Caco-2 (cell line): ENCODE measurements at regions of chr13 and their contacts with region 1.

Region 1: DNA sequence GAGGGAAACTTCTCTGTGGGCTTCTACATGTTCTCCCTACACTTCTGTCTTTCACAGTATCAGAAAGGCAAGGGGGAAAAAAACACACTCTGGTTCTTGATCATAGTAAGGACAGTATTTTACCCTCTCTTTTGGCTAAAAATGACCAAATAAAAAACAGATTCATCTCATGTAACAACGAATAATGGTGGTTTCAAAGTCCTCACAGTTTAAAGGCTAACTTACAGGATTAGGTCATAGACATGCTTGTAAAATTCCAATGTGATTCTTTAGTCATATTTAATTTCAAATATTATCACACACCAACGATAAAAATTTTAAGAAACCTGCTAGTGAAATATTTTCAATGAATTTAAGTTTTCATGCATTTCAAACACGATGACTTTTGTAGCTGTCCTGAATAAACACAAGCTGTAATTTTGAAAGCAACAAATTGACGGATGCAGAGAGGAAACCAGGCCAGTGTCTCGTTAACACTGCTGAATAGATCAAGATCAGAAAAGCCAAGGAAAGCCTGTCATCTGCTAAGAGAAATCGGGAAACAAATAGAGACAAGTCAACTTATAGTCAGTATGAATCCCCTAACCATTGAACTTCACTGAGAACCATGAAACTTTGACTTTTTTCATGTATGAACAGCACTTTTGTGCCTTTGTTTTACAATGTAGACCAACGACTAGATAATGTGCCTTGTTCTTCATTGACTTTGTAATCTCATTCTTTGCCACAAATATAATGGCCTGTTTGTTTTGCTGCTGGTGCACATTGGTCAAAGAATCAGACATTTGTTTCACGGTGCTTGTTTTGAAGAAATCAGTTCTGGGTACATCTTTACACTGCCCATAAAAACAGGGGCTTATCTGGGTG is 22.0 kb downstream of the MBNL2 start:
- DNase-seq: peak; percentile 60 to 61
- H3K4me3 ChIP-seq: no peak overlapping the region
- H3K4me3 Mint-ChIP-seq: peak overlapping the region; percentile 9
- H3K27ac Mint-ChIP-seq: peak overlapping the region; percentile 48
- H3K4me1 ChIP-seq: peaks cover 44% of the 10 kb centered on the region
- H3K4me1 Mint-ChIP-seq: peaks cover 40% of the 10 kb centered on the region
- H3K27me3 ChIP-seq: no peaks in the 10 kb centered on the region
- H3K27me3 Mint-ChIP-seq: no peaks in the 10 kb centered on the region
- CTCF ChIP-seq: no peak

Region 2: DNA sequence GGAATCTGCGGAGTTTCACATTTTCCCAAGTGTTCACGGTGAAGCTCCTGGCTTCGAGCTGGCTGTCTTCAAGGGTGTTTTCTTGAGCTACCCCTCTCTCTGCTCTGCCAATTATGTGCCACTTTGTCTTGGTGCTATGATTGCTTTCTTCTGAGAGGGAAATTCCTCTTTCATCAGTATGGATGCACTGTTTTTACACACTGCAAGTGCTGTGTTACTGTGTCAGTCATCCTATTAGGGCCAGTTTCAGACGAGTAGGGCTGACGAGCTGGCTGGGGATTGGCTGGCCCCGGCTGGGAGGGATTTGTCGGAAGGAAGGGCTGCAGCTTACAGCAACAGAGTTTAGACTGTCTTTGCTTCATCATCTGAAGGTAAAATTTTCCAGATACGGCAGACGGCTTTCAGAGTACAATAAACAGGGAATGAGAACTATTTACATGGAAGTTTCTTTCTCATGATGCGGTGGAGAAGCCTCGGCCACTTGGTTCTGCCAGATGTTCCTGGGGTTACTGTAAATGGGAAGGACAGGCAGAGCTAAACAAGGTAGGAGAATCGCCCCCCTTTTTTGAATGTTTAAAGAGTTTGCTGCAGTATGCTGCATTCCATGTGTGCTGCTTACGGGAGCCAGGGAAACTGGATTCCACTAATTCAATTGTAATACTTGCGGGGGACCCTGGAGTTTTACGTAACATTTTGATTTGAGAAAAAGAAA is 22.0 kb before region 1 on chr13 and contains the start of gene MBNL2:
- CTCF ChIA-PET with region 1: no interaction called
- POLR2A ChIA-PET with region 1: no interaction called
- intact Hi-C with region 1: loop called (anchors 1 kb)
- DNase-seq: peak; percentile 91 to 92
- H3K4me3 ChIP-seq: peak within 1 kb of the TSS; percentile 51
- H3K4me3 Mint-ChIP-seq: peak within 1 kb of the TSS; percentile 95
- H3K27ac Mint-ChIP-seq: peak within 1 kb of the TSS; percentile 89
- H3K4me1 ChIP-seq: peaks cover 43% of the 10 kb centered on the region
- H3K4me1 Mint-ChIP-seq: peaks cover 40% of the 10 kb centered on the region
- H3K27me3 ChIP-seq: no peaks in the 10 kb centered on the region
- H3K27me3 Mint-ChIP-seq: no peaks in the 10 kb centered on the region
- CTCF ChIP-seq: no peak
- total RNA-seq, gene MBNL2: 41.6 TPM in 2 replicates